Activated T-helper 1 cell treated with anti-CD3 and anti-CD28 coated beads, Interleukin-12 subunit alpha, Interleukin-12 subunit beta, Interleukin-2, Interleukin-4 antibody, amounts not matched to agents 30 ng/mL and 10 ng/mL and 1 ng/mL, durations not matched to agents 14 hours and 24 hours and 36 hours (primary cell): ENCODE measurements at regions of chr13 and their contacts with region 1.

Region 1: GRCh38 chr13:110455941-110456340 is 105.6 kb downstream of the RAB20 start:
- DNase-seq: peak; percentile 51
- H3K4me3 Mint-ChIP-seq: peak overlapping the region; percentile 7
- H3K27ac Mint-ChIP-seq: no peak overlapping the region
- H3K4me1 Mint-ChIP-seq: peaks cover 6% of the 10 kb centered on the region
- H3K27me3 Mint-ChIP-seq: peaks cover 16% of the 10 kb centered on the region

Region 2: GRCh38 chr13:109816112-109816818 is 639.7 kb before region 1 on chr13:
- intact Hi-C with region 1: no loop called
- DNase-seq: no peak
- H3K4me3 Mint-ChIP-seq: no peak overlapping the region
- H3K27ac Mint-ChIP-seq: no peak overlapping the region
- H3K4me1 Mint-ChIP-seq: no peaks in the 10 kb centered on the region
- H3K27me3 Mint-ChIP-seq: peaks cover 5% of the 10 kb centered on the region

Region 3: DNA sequence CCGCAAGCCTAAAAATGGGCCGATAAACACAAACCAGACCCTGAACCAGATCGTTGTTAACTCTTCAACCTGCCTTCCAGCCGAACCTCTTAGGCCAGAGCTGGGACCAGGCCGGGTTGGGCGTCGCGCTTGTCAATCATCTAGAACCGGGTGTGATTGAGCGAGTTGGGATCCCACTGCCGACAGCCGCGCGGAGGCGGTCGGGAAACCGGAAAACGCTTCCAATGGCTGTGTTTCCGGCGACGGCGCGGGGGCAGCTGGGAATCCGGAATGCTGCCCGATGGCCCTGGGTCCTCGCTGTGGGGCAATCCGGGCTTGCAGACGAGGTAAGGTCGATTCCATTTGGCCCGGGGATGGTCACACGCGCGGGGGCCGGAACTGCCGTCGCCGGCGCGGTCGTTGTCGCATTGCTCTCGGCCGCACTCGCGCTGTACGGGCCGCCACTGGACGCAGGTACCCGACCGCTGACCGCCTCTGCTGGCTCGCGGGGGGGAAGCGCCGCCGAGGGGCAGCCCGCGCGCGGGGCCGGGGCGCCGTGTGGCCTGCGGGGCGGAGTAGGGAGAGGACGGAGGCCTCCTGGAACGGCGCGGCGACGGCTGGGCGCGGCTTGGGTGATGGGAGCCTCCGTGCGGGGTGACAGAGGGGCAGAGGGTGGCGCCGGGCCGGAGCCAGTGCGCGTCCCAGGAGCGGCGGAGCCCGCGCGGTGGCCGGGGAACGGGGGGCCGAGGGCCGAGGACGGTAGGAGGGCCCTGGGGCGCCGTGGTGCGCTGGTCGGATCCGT is 159.6 kb after region 1 on chr13 and contains the start of gene NAXD:
- intact Hi-C with region 1: loop called (anchors 10 kb)
- DNase-seq: peak; percentile 80
- H3K4me3 Mint-ChIP-seq: peak within 1 kb of the TSS; percentile 96
- H3K27ac Mint-ChIP-seq: peak within 1 kb of the TSS; percentile 94
- H3K4me1 Mint-ChIP-seq: peaks cover 24% of the 10 kb centered on the region
- H3K27me3 Mint-ChIP-seq: peaks cover 4% of the 10 kb centered on the region
- total RNA-seq, gene NAXD: 22.0 and 22.2 TPM in 2 replicates

Region 4: GRCh38 chr13:112443995-112444860 is 1988.3 kb after region 1 on chr13:
- intact Hi-C with region 1: loop called (anchors 5 kb)
- DNase-seq: peak; percentile 27
- H3K4me3 Mint-ChIP-seq: no peak overlapping the region
- H3K27ac Mint-ChIP-seq: no peak overlapping the region
- H3K4me1 Mint-ChIP-seq: no peaks in the 10 kb centered on the region
- H3K27me3 Mint-ChIP-seq: peaks cover 3% of the 10 kb centered on the region